Tibial artery (tissue), 4 donors: ENCODE measurements at regions of chr4 and their contacts with region 1.

Region 1: GRCh38 chr4:55321707-55322264 is 24.3 kb upstream of the SRD5A3 start:
- DNase-seq: peak; percentile 76 to 81
- H3K4me3 ChIP-seq: no peak overlapping the region
- H3K27ac ChIP-seq: no peak overlapping the region
- H3K4me1 ChIP-seq: no peaks in the 10 kb centered on the region
- H3K27me3 ChIP-seq: no peaks in the 10 kb centered on the region
- CTCF ChIP-seq: peak; percentile 55 to 74

Region 2: DNA sequence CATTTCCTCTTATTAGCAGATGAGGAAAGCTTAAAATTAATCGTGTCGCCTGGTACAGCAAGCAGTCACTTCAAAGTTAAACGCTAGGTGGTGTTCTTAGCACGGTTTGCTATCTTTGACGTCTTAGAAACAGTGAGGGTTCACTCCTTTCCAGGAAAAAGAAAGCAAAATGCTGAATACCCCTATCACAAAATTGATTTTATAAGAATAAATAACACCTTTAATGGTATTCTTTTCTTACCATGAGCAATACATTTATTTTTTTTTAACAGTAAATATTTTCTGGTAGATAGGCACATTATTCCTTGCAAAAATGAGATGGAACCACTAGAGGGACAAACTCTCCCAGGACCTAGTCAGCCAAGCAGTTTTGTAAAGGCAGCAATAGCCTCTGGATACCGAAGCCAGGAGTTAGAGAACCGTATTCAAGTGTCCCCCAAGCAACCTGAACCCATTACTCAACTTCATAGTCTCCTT is 350.3 kb before region 1 on chr4:
- intact Hi-C with region 1: loop called (anchors 5 kb)
- DNase-seq: no peak
- H3K4me3 ChIP-seq: no peak overlapping the region
- H3K27ac ChIP-seq: no peak overlapping the region
- H3K4me1 ChIP-seq: no peaks in the 10 kb centered on the region
- H3K27me3 ChIP-seq: no peaks in the 10 kb centered on the region
- CTCF ChIP-seq: peak; percentile 64 to 70

Region 3: DNA sequence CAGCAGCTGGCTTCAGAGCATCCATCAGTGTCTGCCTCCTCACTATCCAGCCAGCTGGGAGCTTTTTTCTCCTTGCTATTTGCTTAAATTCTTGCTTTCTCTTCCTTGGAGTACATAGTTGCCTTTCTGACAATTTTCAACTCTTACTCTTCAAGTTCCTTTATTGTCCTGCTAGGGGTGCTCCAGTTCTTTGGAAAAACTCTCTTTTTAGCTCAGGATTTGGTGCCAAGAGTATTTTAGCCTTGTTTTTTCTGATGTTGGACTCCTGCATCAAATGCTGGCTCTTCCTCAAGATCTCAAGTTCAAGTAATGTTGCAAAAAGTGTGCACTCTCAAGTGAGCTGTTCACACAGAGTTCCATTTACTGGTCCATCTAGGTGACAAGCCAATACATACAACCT is 322.8 kb before region 1 on chr4:
- intact Hi-C with region 1: loop called (anchors 5 kb)
- DNase-seq: no peak
- H3K4me3 ChIP-seq: no peak overlapping the region
- H3K27ac ChIP-seq: no peak overlapping the region
- H3K4me1 ChIP-seq: peaks cover 0 to 19% (median 8%) of the 10 kb centered on the region in 4 donors
- H3K27me3 ChIP-seq: no peaks in the 10 kb centered on the region
- CTCF ChIP-seq: peak; percentile 68 to 83

Region 4: GRCh38 chr4:55169352-55169961 is 152.3 kb before region 1 on chr4:
- intact Hi-C with region 1: no loop called
- DNase-seq: no peak
- H3K4me3 ChIP-seq: no peak overlapping the region
- H3K27ac ChIP-seq: no peak overlapping the region
- H3K4me1 ChIP-seq: no peaks in the 10 kb centered on the region
- H3K27me3 ChIP-seq: no peaks in the 10 kb centered on the region
- CTCF ChIP-seq: no peak